Caco-2 (cell line): ENCODE measurements at regions of chr5 and their contacts with region 1.

Region 1: DNA sequence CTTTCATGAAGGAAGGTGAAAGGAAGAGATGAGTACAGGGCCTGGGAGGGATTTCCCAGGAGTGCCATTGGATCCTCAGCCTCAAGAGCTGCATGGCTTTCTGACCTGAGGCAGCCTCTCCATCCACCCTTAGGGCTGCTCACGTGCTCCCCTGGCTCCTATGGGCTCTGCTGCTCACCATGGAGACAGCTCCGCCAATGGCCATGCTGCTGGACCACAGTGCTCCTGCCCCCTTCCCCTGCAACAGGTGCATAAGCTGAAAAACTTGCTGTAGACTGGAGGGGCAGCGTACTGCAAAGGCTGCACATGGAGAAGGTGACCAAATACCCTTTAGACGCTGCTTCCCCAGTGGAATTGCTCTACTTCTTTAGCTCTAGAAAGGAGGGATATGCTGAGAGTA is 112.7 kb upstream of the PANK3 start:
- DNase-seq: no peak
- H3K4me3 ChIP-seq: no peak overlapping the region
- H3K4me3 Mint-ChIP-seq: peak overlapping the region; percentile 3
- H3K27ac Mint-ChIP-seq: peak overlapping the region; percentile 88
- H3K4me1 ChIP-seq: peaks cover 65% of the 10 kb centered on the region
- H3K4me1 Mint-ChIP-seq: peaks cover 67% of the 10 kb centered on the region
- H3K27me3 ChIP-seq: no peaks in the 10 kb centered on the region
- H3K27me3 Mint-ChIP-seq: no peaks in the 10 kb centered on the region
- CTCF ChIP-seq: no peak

Region 2: DNA sequence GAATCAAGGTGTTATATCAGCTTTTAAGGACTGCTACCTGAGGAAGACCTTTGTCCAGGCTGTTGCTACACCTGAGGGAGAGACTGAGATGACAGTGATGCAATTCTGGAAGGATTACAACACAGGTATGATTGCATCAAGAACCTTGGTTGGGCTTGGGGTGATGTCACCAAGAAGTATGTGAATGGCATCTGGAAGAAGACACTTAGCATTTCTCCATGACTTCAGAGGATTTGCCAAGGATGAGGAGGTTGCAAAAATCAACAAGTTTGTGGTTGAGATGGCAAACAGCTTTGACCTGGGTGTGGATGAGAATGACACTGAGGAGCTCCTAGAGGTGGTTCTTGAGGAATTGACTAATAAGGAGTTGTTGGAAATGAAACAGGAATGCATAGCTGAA is 44.8 kb before region 1 on chr5:
- CTCF ChIA-PET with region 1: no interaction called
- POLR2A ChIA-PET with region 1: interaction called, 3 read pairs
- intact Hi-C with region 1: loop called (anchors 2 kb)
- DNase-seq: peak; percentile 63 to 75
- H3K4me3 ChIP-seq: no peak overlapping the region
- H3K4me3 Mint-ChIP-seq: no peak overlapping the region
- H3K27ac Mint-ChIP-seq: peak overlapping the region; percentile 74
- H3K4me1 ChIP-seq: peaks cover 12% of the 10 kb centered on the region; the same call in 1 of the 2 replicates
- H3K4me1 Mint-ChIP-seq: peaks cover 9% of the 10 kb centered on the region
- H3K27me3 ChIP-seq: no peaks in the 10 kb centered on the region
- H3K27me3 Mint-ChIP-seq: no peaks in the 10 kb centered on the region
- CTCF ChIP-seq: no peak

Region 3: GRCh38 chr5:168712280-168712924 is 20.5 kb after region 1 on chr5:
- CTCF ChIA-PET with region 1: interaction called, 12 read pairs
- POLR2A ChIA-PET with region 1: no interaction called
- intact Hi-C with region 1: no loop called
- DNase-seq: no peak
- H3K4me3 ChIP-seq: no peak overlapping the region
- H3K4me3 Mint-ChIP-seq: no peak overlapping the region
- H3K27ac Mint-ChIP-seq: no peak overlapping the region
- H3K4me1 ChIP-seq: no peaks in the 10 kb centered on the region
- H3K4me1 Mint-ChIP-seq: no peaks in the 10 kb centered on the region
- H3K27me3 ChIP-seq: no peaks in the 10 kb centered on the region
- H3K27me3 Mint-ChIP-seq: no peaks in the 10 kb centered on the region
- CTCF ChIP-seq: no peak

Region 4: GRCh38 chr5:168874713-168875380 is 183.0 kb after region 1 on chr5:
- CTCF ChIA-PET with region 1: no interaction called
- POLR2A ChIA-PET with region 1: no interaction called
- intact Hi-C with region 1: loop called (anchors 5 kb)
- DNase-seq: peak; percentile 33 to 47
- H3K4me3 ChIP-seq: no peak overlapping the region
- H3K4me3 Mint-ChIP-seq: no peak overlapping the region
- H3K27ac Mint-ChIP-seq: no peak overlapping the region
- H3K4me1 ChIP-seq: peaks cover 6% of the 10 kb centered on the region; the same call in 1 of the 2 replicates
- H3K4me1 Mint-ChIP-seq: peaks cover 7% of the 10 kb centered on the region
- H3K27me3 ChIP-seq: no peaks in the 10 kb centered on the region
- H3K27me3 Mint-ChIP-seq: peaks cover 4% of the 10 kb centered on the region
- CTCF ChIP-seq: peak; percentile 45 to 63

Region 5: GRCh38 chr5:169458221-169458620 is 766.3 kb after region 1 on chr5:
- CTCF ChIA-PET with region 1: interaction called, 12 read pairs
- POLR2A ChIA-PET with region 1: no interaction called
- intact Hi-C with region 1: no loop called
- DNase-seq: no peak
- H3K4me3 ChIP-seq: no peak overlapping the region
- H3K4me3 Mint-ChIP-seq: no peak overlapping the region
- H3K27ac Mint-ChIP-seq: no peak overlapping the region
- H3K4me1 ChIP-seq: no peaks in the 10 kb centered on the region
- H3K4me1 Mint-ChIP-seq: no peaks in the 10 kb centered on the region
- H3K27me3 ChIP-seq: no peaks in the 10 kb centered on the region
- H3K27me3 Mint-ChIP-seq: no peaks in the 10 kb centered on the region
- CTCF ChIP-seq: no peak